ENCODE measurements at regions of chr19 and their contacts with region 1.

Region 1: GRCh38 chr19:18401580-18402112 is 4.2 kb upstream of the LRRC25 start:
- DNase-seq: peak in 1 of 2 donors; percentile 80
- H3K4me3 ChIP-seq: no peak overlapping the region
- H3K27ac ChIP-seq: no peak overlapping the region
- H3K4me1 ChIP-seq: no peaks in the 10 kb centered on the region
- H3K27me3 ChIP-seq: peaks cover 4% of the 10 kb centered on the region
- CTCF ChIP-seq: no peak

Region 2: DNA sequence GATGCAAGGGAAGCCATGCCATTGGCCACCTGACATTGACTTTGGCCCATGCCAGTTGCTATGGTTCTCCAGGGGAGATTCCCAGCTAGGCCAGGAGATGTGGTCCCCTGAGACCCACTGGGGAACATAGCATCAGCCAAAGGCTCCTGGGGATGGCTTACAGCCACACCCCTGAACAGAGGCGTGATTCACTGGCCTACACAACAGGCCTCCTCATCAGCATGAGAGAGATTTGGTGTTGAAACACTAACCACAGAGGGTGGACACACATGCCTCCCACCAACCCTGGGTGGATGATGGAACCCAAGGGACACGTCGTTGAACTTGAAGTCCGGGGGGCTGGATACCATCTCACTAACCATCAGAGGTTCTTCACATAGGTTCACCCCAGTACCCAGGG is 141.8 kb before region 1 on chr19:
- intact Hi-C with region 1: loop called (anchors 5 kb)
- DNase-seq: no peak
- H3K4me3 ChIP-seq: no peak overlapping the region
- H3K27ac ChIP-seq: no peak overlapping the region
- H3K4me1 ChIP-seq: no peaks in the 10 kb centered on the region
- H3K27me3 ChIP-seq: no peaks in the 10 kb centered on the region
- CTCF ChIP-seq: no peak

Measured in ascending aorta (tissue), 2 donors.